ENCODE measurements at regions of chr1 and their contacts with region 1.

Region 1: DNA sequence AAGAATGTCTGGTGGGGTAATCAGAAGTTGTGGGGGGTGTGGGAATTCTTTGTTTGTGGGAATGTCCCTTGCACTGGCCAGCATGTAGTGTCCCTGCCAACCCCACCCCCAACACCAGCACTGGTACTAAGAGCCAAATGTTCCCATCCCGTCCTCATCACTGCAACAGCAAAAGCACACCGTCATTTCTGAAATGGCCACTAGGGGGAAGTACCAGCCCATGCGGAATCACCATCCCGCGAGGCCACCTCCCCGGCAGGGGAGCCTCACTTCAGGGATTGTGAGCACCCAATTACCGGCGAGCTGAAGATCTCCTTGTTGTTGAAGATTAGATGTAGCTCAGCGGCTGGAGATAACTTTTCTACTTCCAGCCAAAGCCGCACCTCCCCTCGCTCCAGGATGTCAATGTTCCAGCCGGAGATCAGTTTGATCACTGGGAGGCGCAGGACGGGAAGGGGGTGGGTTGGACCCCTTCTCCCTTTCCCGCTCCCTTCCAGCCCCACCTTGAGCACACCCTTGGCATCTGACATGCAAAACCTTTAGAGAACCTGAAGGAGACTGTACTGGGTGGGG is 41.0 kb downstream of the MYOM3 start:
- DNase-seq: peak; percentile 67
- ATAC-seq: peak; percentile 95
- H3K4me3 ChIP-seq: no peak overlapping the region
- H3K27ac ChIP-seq: no peak overlapping the region
- H3K4me1 ChIP-seq: peaks cover 8% of the 10 kb centered on the region; the same call in 1 of the 2 replicates
- H3K27me3 ChIP-seq: no peaks in the 10 kb centered on the region
- CTCF ChIP-seq: peak; percentile 95

Region 2: DNA sequence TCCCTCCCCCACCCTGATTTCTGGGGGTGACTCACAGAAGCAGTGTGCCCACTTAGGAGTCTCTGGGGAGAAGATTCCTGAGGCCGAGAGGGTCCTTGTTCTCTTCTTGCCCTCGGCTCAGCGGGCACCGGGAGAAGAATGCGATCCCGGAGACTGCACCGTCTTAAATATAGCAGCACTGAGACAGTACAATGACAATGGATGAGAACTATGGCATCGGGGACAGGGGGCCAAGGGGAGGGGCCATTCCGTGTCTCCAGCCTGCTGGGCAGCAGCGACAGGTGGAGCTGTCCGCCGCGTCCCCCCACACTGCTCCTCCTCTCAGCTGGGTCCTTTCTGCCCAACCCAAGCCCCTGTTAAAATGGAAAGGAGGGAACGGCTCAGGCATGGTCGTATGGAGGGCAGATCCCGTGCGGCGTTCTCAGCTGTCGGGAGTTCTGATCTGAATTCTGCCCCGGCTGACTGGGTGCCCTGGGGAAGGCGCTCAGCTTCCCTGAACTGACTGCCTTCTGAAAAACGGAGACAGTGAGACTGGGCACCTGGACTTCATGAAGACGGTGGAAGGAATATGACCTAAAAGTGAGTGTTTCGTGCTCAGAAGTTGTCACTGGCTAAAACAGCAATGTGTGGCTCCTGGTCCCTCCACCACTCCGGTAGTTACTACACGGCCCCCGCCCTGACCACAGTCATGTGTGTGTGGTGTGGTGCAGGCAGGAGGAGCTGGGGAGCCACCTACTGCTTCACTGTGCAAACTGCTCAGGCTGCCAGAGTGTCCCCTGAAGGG is 41.3 kb after region 1 on chr1 and contains the start of gene MYOM3:
- CTCF ChIA-PET with region 1: interaction called, 7 read pairs
- POLR2A ChIA-PET with region 1: no interaction called
- in situ Hi-C with region 1: no loop called
- intact Hi-C with region 1: loop called (anchors 5 kb)
- DNase-seq: peak; percentile 33
- ATAC-seq: peak; percentile 96
- H3K4me3 ChIP-seq: peak within 1 kb of the TSS; percentile 18 to 45; a peak in 3 of 4 replicates
- H3K27ac ChIP-seq: peak within 1 kb of the TSS; percentile 65; the same call in 1 of the 2 replicates
- H3K4me1 ChIP-seq: peaks cover 27% of the 10 kb centered on the region
- H3K27me3 ChIP-seq: no peaks in the 10 kb centered on the region
- CTCF ChIP-seq: peak; percentile 90
- total RNA-seq, gene MYOM3: 0.05 TPM